Activated CD4-positive, alpha-beta memory T cell treated with anti-CD3 and anti-CD28 coated beads, Interleukin-2, amount 10 ng/mL, durations not matched to agents 7 days and 5 days (primary cell): ENCODE measurements at regions of chr14 and their contacts with region 1.

Region 1: GRCh38 chr14:49585803-49586672 is at the start of gene RPS29:
- DNase-seq: peak; percentile 99
- H3K4me3 Mint-ChIP-seq: peak within 1 kb of the TSS; percentile 85
- H3K27ac Mint-ChIP-seq: peak within 1 kb of the TSS; percentile 99
- H3K4me1 Mint-ChIP-seq: peaks cover 50% of the 10 kb centered on the region
- H3K27me3 Mint-ChIP-seq: no peaks in the 10 kb centered on the region
- total RNA-seq, gene RPS29: 1,659 to 1,700 TPM

Region 2: GRCh38 chr14:49553106-49553505 is 32.9 kb before region 1 on chr14:
- CTCF ChIA-PET with region 1: no interaction called
- POLR2A ChIA-PET with region 1: no interaction called
- DNase-seq: no peak
- H3K4me3 Mint-ChIP-seq: no peak overlapping the region
- H3K27ac Mint-ChIP-seq: no peak overlapping the region
- H3K4me1 Mint-ChIP-seq: no peaks in the 10 kb centered on the region
- H3K27me3 Mint-ChIP-seq: no peaks in the 10 kb centered on the region

Region 3: GRCh38 chr14:49574038-49574437 is 12.0 kb before region 1 on chr14:
- CTCF ChIA-PET with region 1: interaction called, 4 read pairs
- POLR2A ChIA-PET with region 1: interaction called, 11 read pairs
- DNase-seq: no peak
- H3K4me3 Mint-ChIP-seq: no peak overlapping the region
- H3K27ac Mint-ChIP-seq: no peak overlapping the region
- H3K4me1 Mint-ChIP-seq: peaks cover 17% of the 10 kb centered on the region
- H3K27me3 Mint-ChIP-seq: no peaks in the 10 kb centered on the region

Region 4: DNA sequence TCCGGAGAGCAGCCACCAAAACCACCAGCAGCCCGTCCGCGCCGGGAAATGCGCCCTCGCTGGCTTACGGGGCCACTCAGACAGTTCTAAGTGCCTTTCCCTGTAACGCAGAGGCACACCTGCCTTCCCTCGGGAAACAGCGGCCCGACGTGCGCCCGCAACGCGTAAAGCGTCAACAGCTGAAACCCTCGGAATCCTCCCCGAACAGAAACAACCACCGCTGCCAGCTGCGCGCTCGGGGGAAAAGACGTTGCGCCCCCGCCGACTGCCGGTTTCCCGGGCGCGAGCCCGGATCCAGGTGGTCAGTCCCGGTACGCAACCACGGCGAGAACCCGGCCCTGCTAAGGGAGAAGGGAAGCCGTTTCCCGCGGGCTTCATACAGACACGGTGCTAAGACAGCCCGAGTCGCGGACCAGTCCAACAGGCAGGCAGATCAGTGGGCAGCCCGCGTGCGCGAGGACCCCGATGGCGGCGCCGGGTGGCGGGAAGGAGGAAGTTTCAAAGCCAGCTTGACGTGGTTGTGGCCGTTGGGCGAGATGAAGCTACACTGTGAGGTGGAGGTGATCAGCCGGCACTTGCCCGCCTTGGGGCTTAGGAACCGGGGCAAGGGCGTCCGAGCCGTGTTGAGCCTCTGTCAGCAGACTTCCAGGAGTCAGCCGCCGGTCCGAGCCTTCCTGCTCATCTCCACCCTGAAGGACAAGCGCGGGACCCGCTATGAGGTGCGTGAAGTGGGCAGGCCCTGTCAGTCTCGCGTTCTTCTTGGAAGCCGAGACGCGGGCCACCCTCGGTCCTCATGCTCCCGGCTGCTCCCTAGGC is 12.7 kb after region 1 on chr14 and contains the start of gene LRR1:
- CTCF ChIA-PET with region 1: interaction called, 39 read pairs
- POLR2A ChIA-PET with region 1: interaction called, 243 read pairs
- DNase-seq: peak; percentile 88
- H3K4me3 Mint-ChIP-seq: peak within 1 kb of the TSS; percentile 95
- H3K27ac Mint-ChIP-seq: peak within 1 kb of the TSS; percentile 95
- H3K4me1 Mint-ChIP-seq: peaks cover 47% of the 10 kb centered on the region
- H3K27me3 Mint-ChIP-seq: no peaks in the 10 kb centered on the region
- total RNA-seq, gene LRR1: 48.7 to 53.2 TPM

Region 5: GRCh38 chr14:49620182-49621113 is 34.4 kb after region 1 on chr14 and contains the starts of genes MGAT2 and RPL36AL:
- CTCF ChIA-PET with region 1: interaction called, 37 read pairs
- POLR2A ChIA-PET with region 1: interaction called, 144 read pairs
- DNase-seq: peak; percentile 96
- H3K4me3 Mint-ChIP-seq: peak within 1 kb of the TSS; percentile 94
- H3K27ac Mint-ChIP-seq: peak within 1 kb of the TSS; percentile 94
- H3K4me1 Mint-ChIP-seq: peaks cover 50% of the 10 kb centered on the region
- H3K27me3 Mint-ChIP-seq: no peaks in the 10 kb centered on the region
- total RNA-seq, gene MGAT2: 82.7 to 86.5 TPM
- total RNA-seq, gene RPL36AL: 320 to 330 TPM

Region 6: GRCh38 chr14:49692811-49693734 is 107.0 kb after region 1 on chr14 and contains the start of gene KLHDC1:
- CTCF ChIA-PET with region 1: interaction called, 3 read pairs
- POLR2A ChIA-PET with region 1: interaction called, 14 read pairs
- DNase-seq: peak; percentile 77
- H3K4me3 Mint-ChIP-seq: peak within 1 kb of the TSS; percentile 72
- H3K27ac Mint-ChIP-seq: peak within 1 kb of the TSS; percentile 66
- H3K4me1 Mint-ChIP-seq: peaks cover 38% of the 10 kb centered on the region
- H3K27me3 Mint-ChIP-seq: no peaks in the 10 kb centered on the region
- total RNA-seq, gene KLHDC1: 2.4 to 2.6 TPM

Region 7: DNA sequence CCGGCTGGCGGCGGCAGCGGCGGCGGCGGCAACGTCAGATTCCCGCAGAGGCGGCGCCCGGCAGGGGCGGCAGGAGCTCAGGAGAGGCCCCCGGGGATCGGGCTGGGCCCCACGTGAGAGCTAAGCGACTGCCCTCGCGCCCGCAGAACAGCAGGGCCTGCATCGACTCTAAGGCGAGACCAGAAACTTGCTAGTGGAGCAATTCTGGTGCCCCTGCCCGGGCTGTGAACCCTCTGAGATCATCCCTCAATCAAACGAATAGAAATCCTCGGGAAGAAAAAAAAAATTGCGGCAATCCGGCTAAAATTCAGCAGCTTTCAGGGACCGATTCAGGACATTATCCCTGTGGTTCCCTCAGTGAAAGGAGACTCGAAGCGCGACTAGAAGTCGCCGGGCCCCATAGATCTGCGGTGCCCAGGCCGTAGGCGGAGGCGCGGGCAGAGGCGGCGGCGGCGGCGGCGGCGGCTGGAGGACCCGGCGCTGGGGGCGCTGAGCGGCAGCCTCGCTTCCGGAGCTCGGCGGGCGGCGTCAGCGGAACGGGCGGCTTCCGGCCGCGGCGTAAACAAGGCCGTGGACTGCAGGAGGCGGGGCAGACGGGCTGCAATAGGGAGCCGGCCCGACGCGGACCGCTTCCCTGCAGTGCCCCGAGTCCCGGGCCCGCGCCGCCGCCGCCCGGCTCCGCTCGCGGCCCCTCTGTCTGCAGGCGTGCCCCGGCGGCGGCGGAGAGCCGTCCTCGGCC is 181.7 kb after region 1 on chr14 and contains the start of gene KLHDC2:
- CTCF ChIA-PET with region 1: interaction called, 5 read pairs
- POLR2A ChIA-PET with region 1: interaction called, 33 read pairs
- DNase-seq: peak; percentile 92
- H3K4me3 Mint-ChIP-seq: peak within 1 kb of the TSS; percentile 98
- H3K27ac Mint-ChIP-seq: peak within 1 kb of the TSS; percentile 98
- H3K4me1 Mint-ChIP-seq: peaks cover 37% of the 10 kb centered on the region
- H3K27me3 Mint-ChIP-seq: no peaks in the 10 kb centered on the region
- total RNA-seq, gene KLHDC2: 34.3 to 34.7 TPM

Region 8: GRCh38 chr14:50311975-50312733 is 726.1 kb after region 1 on chr14 and contains the starts of genes DMAC2L and L2HGDH:
- CTCF ChIA-PET with region 1: no interaction called
- POLR2A ChIA-PET with region 1: interaction called, 14 read pairs
- DNase-seq: peak; percentile 91
- H3K4me3 Mint-ChIP-seq: peak within 1 kb of the TSS; percentile 95
- H3K27ac Mint-ChIP-seq: peak within 1 kb of the TSS; percentile 84
- H3K4me1 Mint-ChIP-seq: peaks cover 35% of the 10 kb centered on the region
- H3K27me3 Mint-ChIP-seq: no peaks in the 10 kb centered on the region
- total RNA-seq, gene DMAC2L: 12.2 to 12.6 TPM
- total RNA-seq, gene L2HGDH: 9.7 to 10.0 TPM